ENCODE measurements at regions of chr2 and their contacts with region 1.

Region 1: GRCh38 chr2:27428213-27428977 is at the start of gene NRBP1:
- DNase-seq: peak; percentile 83 to 97 (median 88)
- ATAC-seq: peak; percentile 97
- H3K4me3 ChIP-seq: peak within 1 kb of the TSS; percentile 84
- H3K4me3 Mint-ChIP-seq: peak within 1 kb of the TSS; percentile 91 to 99 (median 98)
- H3K27ac ChIP-seq: peak within 1 kb of the TSS; percentile 94
- H3K27ac Mint-ChIP-seq: peak within 1 kb of the TSS; percentile 89 to 99 (median 97)
- H3K4me1 ChIP-seq: peaks cover 23 to 28% of the 10 kb centered on the region in 2 donors
- H3K4me1 Mint-ChIP-seq: peaks cover 32 to 48% (median 39%) of the 10 kb centered on the region in 7 donors
- H3K27me3 ChIP-seq: no peaks in the 10 kb centered on the region
- H3K27me3 Mint-ChIP-seq: peaks cover 0 to 3% (median 0%) of the 10 kb centered on the region in 5 donors
- total RNA-seq, gene NRBP1: 94.4 to 181 (median 121) TPM

Region 2: GRCh38 chr2:27050281-27050995 is 378.0 kb before region 1 on chr2:
- CTCF ChIA-PET with region 1: no interaction called
- POLR2A ChIA-PET with region 1: interaction called, 5 read pairs
- intact Hi-C with region 1: loop called in 1 of 2 experiments (anchors 1 kb)
- DNase-seq: peak; percentile 77 to 95 (median 94)
- ATAC-seq: peak; percentile 76
- H3K4me3 ChIP-seq: peak overlapping the region; percentile 99
- H3K4me3 Mint-ChIP-seq: peak overlapping the region; percentile 86 to 100 (median 99)
- H3K27ac ChIP-seq: peak overlapping the region; percentile 84
- H3K27ac Mint-ChIP-seq: peak overlapping the region; percentile 96 to 100 (median 100)
- H3K4me1 ChIP-seq: peaks cover 8 to 15% of the 10 kb centered on the region in 2 donors
- H3K4me1 Mint-ChIP-seq: peaks cover 10 to 34% (median 19%) of the 10 kb centered on the region in 7 donors
- H3K27me3 ChIP-seq: no peaks in the 10 kb centered on the region
- H3K27me3 Mint-ChIP-seq: peaks cover 0 to 8% (median 4%) of the 10 kb centered on the region in 5 donors

Region 3: GRCh38 chr2:27356382-27357181 is 71.8 kb before region 1 on chr2 and contains the start of gene GTF3C2:
- CTCF ChIA-PET with region 1: no interaction called
- POLR2A ChIA-PET with region 1: interaction called, 8 read pairs
- intact Hi-C with region 1: loop called (anchors 1 to 5 kb)
- DNase-seq: peak; percentile 76 to 94 (median 92)
- ATAC-seq: peak; percentile 85
- H3K4me3 ChIP-seq: peak within 1 kb of the TSS; percentile 96
- H3K4me3 Mint-ChIP-seq: peak within 1 kb of the TSS; percentile 95 to 100 (median 98)
- H3K27ac ChIP-seq: peak within 1 kb of the TSS; percentile 91
- H3K27ac Mint-ChIP-seq: peak within 1 kb of the TSS; percentile 96 to 100 (median 99)
- H3K4me1 ChIP-seq: peaks cover 24 to 34% of the 10 kb centered on the region in 2 donors
- H3K4me1 Mint-ChIP-seq: peaks cover 38 to 63% (median 56%) of the 10 kb centered on the region in 7 donors
- H3K27me3 ChIP-seq: no peaks in the 10 kb centered on the region
- H3K27me3 Mint-ChIP-seq: no peaks in the 10 kb centered on the region
- total RNA-seq, gene GTF3C2: 68.0 to 106 (median 78.3) TPM

Region 4: DNA sequence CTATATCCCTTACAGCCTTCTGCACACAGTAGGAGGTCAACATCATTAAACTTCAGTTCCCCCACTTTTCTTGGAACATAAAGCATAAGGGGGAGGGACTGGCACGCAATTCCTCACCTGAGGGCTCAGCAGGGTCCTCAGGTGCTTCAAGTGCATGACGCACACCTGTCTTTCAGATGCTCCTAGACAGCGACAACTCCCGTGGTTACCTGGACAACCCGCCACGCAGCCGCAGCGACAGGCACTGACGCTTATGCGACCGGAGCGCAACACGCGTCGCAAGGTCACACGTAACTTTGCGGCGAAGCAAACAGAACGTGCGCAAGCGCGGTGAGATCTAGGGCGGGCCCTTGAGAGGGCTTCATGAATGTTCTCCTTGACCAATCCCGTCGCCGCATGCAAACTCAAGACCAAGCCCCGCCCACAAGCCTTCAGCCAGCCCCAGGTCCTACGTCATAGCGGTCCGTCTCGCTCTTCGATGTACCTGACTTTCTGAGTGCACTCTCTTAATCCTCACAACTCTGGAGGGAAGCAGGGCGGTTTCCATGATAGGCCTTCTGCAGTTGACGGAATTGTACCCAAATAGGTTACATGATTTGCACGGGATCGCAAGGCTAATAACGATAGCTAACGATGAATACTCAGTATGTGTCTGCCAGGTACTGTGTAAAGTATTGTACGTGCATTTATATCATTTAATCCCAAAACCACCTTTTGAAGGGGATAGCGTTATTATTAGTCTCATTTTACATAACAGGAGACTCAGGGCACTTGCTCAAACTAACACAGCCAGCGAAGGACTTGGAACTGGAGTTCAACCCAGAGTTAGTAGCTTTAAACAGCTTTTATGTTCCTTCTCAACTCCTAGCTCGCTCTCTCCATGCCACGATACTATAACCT is 61.4 kb after region 1 on chr2 and contains the start of gene IFT172:
- CTCF ChIA-PET with region 1: no interaction called
- POLR2A ChIA-PET with region 1: interaction called, 4 read pairs
- intact Hi-C with region 1: loop called (anchors 1 kb)
- DNase-seq: peak; percentile 90 to 100 (median 99)
- ATAC-seq: peak; percentile 96
- H3K4me3 ChIP-seq: peak within 1 kb of the TSS; percentile 63
- H3K4me3 Mint-ChIP-seq: peak within 1 kb of the TSS; percentile 78 to 92 (median 84)
- H3K27ac ChIP-seq: peak within 1 kb of the TSS; percentile 80
- H3K27ac Mint-ChIP-seq: peak within 1 kb of the TSS; percentile 82 to 99 (median 98)
- H3K4me1 ChIP-seq: peaks cover 11 to 16% of the 10 kb centered on the region in 2 donors
- H3K4me1 Mint-ChIP-seq: peaks cover 8 to 29% (median 19%) of the 10 kb centered on the region in 7 donors
- H3K27me3 ChIP-seq: peaks cover 0 to 7% of the 10 kb centered on the region in 2 donors
- H3K27me3 Mint-ChIP-seq: peaks cover 13 to 20% (median 17%) of the 10 kb centered on the region in 5 donors
- total RNA-seq, gene IFT172: 12.3 to 35.8 (median 22.2) TPM

Region 5: GRCh38 chr2:27663463-27664249 is 235.3 kb after region 1 on chr2 and contains the starts of genes SLC4A1AP and SUPT7L:
- CTCF ChIA-PET with region 1: no interaction called
- POLR2A ChIA-PET with region 1: no interaction called
- intact Hi-C with region 1: loop called (anchors 1 to 5 kb)
- DNase-seq: peak; percentile 74 to 88 (median 82)
- ATAC-seq: peak; percentile 89
- H3K4me3 ChIP-seq: peak within 1 kb of the TSS; percentile 98
- H3K4me3 Mint-ChIP-seq: peak within 1 kb of the TSS; percentile 94 to 100 (median 100)
- H3K27ac ChIP-seq: peak within 1 kb of the TSS; percentile 95
- H3K27ac Mint-ChIP-seq: peak within 1 kb of the TSS; percentile 98 to 100 (median 99)
- H3K4me1 ChIP-seq: peaks cover 18 to 20% of the 10 kb centered on the region in 2 donors
- H3K4me1 Mint-ChIP-seq: peaks cover 35 to 75% (median 64%) of the 10 kb centered on the region in 7 donors
- H3K27me3 ChIP-seq: no peaks in the 10 kb centered on the region
- H3K27me3 Mint-ChIP-seq: no peaks in the 10 kb centered on the region
- total RNA-seq, gene SLC4A1AP: 14.7 to 27.0 (median 23.2) TPM
- total RNA-seq, gene SUPT7L: 37.9 to 58.6 (median 46.5) TPM